A549 (cell line): ENCODE measurements at regions of chr11 and their contacts with region 1.

Region 1: GRCh38 chr11:57324886-57325734 is at the start of gene TNKS1BP1:
- DNase-seq: peak; percentile 94 to 97
- ATAC-seq: peak; percentile 63 to 81
- H3K4me3 ChIP-seq: peak within 1 kb of the TSS; percentile 64
- H3K27ac ChIP-seq: peak within 1 kb of the TSS; percentile 91 to 99
- H3K4me1 ChIP-seq: peaks cover 42% of the 10 kb centered on the region
- CTCF ChIP-seq: no peak
- EP300 ChIP-seq: no peak
- POLR2A ChIP-seq: peak; percentile 32
- RAD21 ChIP-seq: no peak
- polyA plus RNA-seq, gene TNKS1BP1: 35.0 and 36.5 TPM in 2 replicates

Region 2: GRCh38 chr11:57311109-57311936 is 13.8 kb before region 1 on chr11:
- CTCF ChIA-PET with region 1: interaction called, 16 read pairs
- POLR2A ChIA-PET with region 1: interaction called, 42 read pairs
- DNase-seq: peak; percentile 92 to 98
- ATAC-seq: peak; percentile 90 to 98
- H3K4me3 ChIP-seq: peak overlapping the region; percentile 39
- H3K27ac ChIP-seq: peak overlapping the region; percentile 70 to 93
- H3K4me1 ChIP-seq: peaks cover 48% of the 10 kb centered on the region
- CTCF ChIP-seq: no peak
- EP300 ChIP-seq: no peak
- POLR2A ChIP-seq: peak; percentile 32; the same call in 1 of the 2 replicates
- RAD21 ChIP-seq: 0 out of 5 replicates have a peak, but pooled peaks of 1 of the 2 experiments have one; percentile 16

Region 3: GRCh38 chr11:57335343-57336110 is 10.4 kb after region 1 on chr11 and contains the start of gene SSRP1:
- CTCF ChIA-PET with region 1: interaction called, 8 read pairs
- POLR2A ChIA-PET with region 1: interaction called, 35 read pairs
- DNase-seq: peak; percentile 91 to 92
- ATAC-seq: peak; percentile 94 to 99
- H3K4me3 ChIP-seq: peak within 1 kb of the TSS; percentile 81
- H3K27ac ChIP-seq: peak within 1 kb of the TSS; percentile 95 to 99
- H3K4me1 ChIP-seq: peaks cover 18% of the 10 kb centered on the region
- CTCF ChIP-seq: no peak; the same call in 2 of the 3 replicates
- EP300 ChIP-seq: no peak
- POLR2A ChIP-seq: peak; percentile 56
- RAD21 ChIP-seq: no peak
- polyA plus RNA-seq, gene SSRP1: 282 and 288 TPM in 2 replicates